ENCODE measurements at regions of chr12 and their contacts with region 1.

Region 1: GRCh38 chr12:31728917-31729640 is at the start of gene AMN1:
- DNase-seq: peak; percentile 100
- H3K4me3 Mint-ChIP-seq: peak within 1 kb of the TSS; percentile 95
- H3K27ac Mint-ChIP-seq: peak within 1 kb of the TSS; percentile 99
- H3K4me1 Mint-ChIP-seq: peaks cover 51% of the 10 kb centered on the region
- H3K27me3 Mint-ChIP-seq: no peaks in the 10 kb centered on the region
- total RNA-seq, gene AMN1: 3.2 to 4.0 TPM

Region 2: GRCh38 chr12:31659087-31659933 is 69.8 kb before region 1 on chr12 and contains the start of gene ETFBKMT:
- CTCF ChIA-PET with region 1: interaction called, 8 read pairs
- POLR2A ChIA-PET with region 1: interaction called, 19 read pairs
- DNase-seq: peak; percentile 96
- H3K4me3 Mint-ChIP-seq: peak within 1 kb of the TSS; percentile 96
- H3K27ac Mint-ChIP-seq: peak within 1 kb of the TSS; percentile 100
- H3K4me1 Mint-ChIP-seq: peaks cover 22% of the 10 kb centered on the region
- H3K27me3 Mint-ChIP-seq: no peaks in the 10 kb centered on the region
- total RNA-seq, gene ETFBKMT: 1.3 to 1.4 TPM

Region 3: DNA sequence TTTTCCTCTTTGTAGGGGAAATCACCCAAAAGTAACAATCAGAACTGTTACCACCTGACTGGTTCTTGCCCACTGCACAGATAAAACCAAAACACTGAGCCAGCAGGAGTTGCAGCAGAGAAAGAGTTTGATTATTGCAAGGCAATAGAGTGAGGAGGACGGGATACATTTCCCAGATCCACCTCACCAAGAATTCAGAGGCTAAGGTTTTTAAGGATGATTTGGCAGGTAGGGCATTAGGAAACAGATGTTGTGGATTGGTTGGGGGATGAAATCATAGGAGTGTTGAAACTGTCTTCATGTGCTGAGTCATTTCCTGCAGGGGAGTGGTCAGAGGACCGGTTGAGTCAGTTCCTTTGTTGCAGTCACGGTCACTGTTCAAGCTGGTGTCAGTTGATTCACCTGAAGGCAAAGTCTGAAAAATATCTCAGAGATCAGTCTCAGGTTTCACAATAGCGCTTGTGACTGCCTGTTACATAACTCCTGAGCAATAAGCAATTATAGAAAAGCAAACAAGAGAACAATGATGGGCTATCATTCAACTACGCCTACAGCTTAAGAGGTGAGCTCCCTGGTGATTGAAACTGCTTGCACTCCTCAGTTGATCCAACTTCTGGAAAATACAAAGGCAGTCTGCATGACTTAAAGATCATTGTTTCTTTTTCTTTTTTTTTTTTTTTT is 20.1 kb after region 1 on chr12:
- CTCF ChIA-PET with region 1: no interaction called
- POLR2A ChIA-PET with region 1: interaction called, 29 read pairs
- DNase-seq: peak; percentile 83
- H3K4me3 Mint-ChIP-seq: peak overlapping the region; percentile 0
- H3K27ac Mint-ChIP-seq: peak overlapping the region; percentile 67
- H3K4me1 Mint-ChIP-seq: peaks cover 52% of the 10 kb centered on the region
- H3K27me3 Mint-ChIP-seq: peaks cover 3% of the 10 kb centered on the region

Region 4: GRCh38 chr12:31890295-31891285 is 161.5 kb after region 1 on chr12:
- CTCF ChIA-PET with region 1: no interaction called
- POLR2A ChIA-PET with region 1: interaction called, 24 read pairs
- DNase-seq: peak; percentile 20
- H3K4me3 Mint-ChIP-seq: peak overlapping the region; percentile 18
- H3K27ac Mint-ChIP-seq: peak overlapping the region; percentile 90
- H3K4me1 Mint-ChIP-seq: peaks cover 51% of the 10 kb centered on the region
- H3K27me3 Mint-ChIP-seq: no peaks in the 10 kb centered on the region

Region 5: DNA sequence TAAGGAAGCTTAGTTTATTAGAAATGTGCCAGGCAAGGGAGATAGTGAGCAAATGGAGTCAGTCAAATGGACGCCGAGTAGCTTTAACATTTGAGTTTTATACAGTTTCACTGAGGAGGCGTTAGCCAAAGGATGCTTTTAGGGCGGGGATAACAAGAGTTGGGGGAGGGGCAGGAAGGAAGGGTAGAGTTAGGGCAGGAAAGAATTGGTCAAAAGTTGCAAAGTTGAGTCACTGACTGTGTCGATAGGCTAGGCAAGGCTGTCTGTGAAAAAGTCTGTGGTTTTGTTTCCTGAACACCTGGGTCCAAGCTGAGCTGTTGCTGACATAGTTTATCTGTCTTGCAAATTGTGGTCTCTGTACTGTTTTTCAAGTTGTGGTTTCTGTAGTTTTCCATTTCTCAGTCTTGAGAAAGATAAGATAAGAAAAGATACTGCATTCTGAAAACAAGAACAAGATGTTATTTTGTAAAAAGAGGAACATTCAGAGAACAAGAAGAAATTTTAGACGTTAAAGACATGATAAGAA is 167.5 kb after region 1 on chr12:
- CTCF ChIA-PET with region 1: interaction called, 4 read pairs
- POLR2A ChIA-PET with region 1: interaction called, 24 read pairs
- DNase-seq: peak; percentile 91
- H3K4me3 Mint-ChIP-seq: peak overlapping the region; percentile 48
- H3K27ac Mint-ChIP-seq: peak overlapping the region; percentile 97
- H3K4me1 Mint-ChIP-seq: peaks cover 53% of the 10 kb centered on the region
- H3K27me3 Mint-ChIP-seq: no peaks in the 10 kb centered on the region

Region 6: GRCh38 chr12:32100361-32100760 is 371.3 kb after region 1 on chr12:
- CTCF ChIA-PET with region 1: no interaction called
- POLR2A ChIA-PET with region 1: no interaction called
- DNase-seq: no peak
- H3K4me3 Mint-ChIP-seq: no peak overlapping the region
- H3K27ac Mint-ChIP-seq: no peak overlapping the region
- H3K4me1 Mint-ChIP-seq: no peaks in the 10 kb centered on the region
- H3K27me3 Mint-ChIP-seq: peaks cover 7% of the 10 kb centered on the region